HEK293 (cell line): ENCODE measurements at regions of chr1 and their contacts with region 1.

Region 1: DNA sequence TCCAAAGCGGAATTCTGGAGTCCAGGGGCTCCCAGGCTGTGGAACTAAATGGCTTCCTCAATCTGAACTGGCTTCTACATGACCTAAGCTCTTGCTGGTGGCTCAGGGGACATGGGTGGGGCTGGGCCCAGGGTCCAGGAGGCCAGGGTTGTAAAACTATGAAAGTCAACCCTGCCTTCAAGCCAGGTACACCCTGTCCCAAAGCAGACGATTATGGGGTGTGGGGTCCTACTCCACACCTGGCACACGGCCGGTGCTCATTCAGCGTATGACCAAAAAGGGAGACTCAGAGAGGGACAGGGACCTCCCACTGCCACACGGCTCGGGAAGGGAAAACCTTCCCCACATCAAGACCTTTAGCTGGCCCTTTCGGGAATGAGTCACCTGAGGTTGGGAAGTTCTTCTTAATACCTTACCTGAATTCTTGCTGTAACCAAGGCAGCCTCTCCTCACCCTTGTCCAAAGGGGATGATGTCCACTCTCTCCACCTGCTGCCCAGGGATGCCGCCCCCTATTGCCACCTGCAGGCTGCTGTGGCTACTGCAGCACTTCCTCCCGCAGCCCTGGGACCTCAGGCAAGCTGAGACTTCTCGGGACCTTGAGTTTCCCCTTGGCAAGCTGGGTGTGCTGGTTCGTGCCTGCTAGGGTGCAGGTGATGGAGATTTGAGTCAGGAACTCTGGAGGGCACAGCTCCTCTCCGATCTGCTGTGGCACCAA is 32.2 kb downstream of the RUNX3 start:
- H3K4me3 ChIP-seq: no peak overlapping the region
- H3K27ac ChIP-seq: no peak overlapping the region
- H3K4me1 ChIP-seq: no peaks in the 10 kb centered on the region
- CTCF ChIP-seq: peak; percentile 83

Region 2: GRCh38 chr1:24868016-24868875 is 29.7 kb before region 1 on chr1:
- CTCF ChIA-PET with region 1: no interaction called
- POLR2A ChIA-PET with region 1: no interaction called
- H3K4me3 ChIP-seq: no peak overlapping the region
- H3K27ac ChIP-seq: no peak overlapping the region
- H3K4me1 ChIP-seq: peaks cover 6% of the 10 kb centered on the region; the same call in 1 of the 2 replicates
- CTCF ChIP-seq: no peak

Region 3: GRCh38 chr1:24878775-24879742 is 18.9 kb before region 1 on chr1:
- CTCF ChIA-PET with region 1: interaction called, 10 read pairs
- POLR2A ChIA-PET with region 1: no interaction called
- H3K4me3 ChIP-seq: no peak overlapping the region
- H3K27ac ChIP-seq: no peak overlapping the region
- H3K4me1 ChIP-seq: no peaks in the 10 kb centered on the region
- CTCF ChIP-seq: no peak